Activated CD4-positive, alpha-beta memory T cell treated with anti-CD3 and anti-CD28 coated beads, Interleukin-2, amount 10 ng/mL, durations not matched to agents 7 days and 5 days (primary cell): ENCODE measurements at regions of chr1 and their contacts with region 1.

Region 1: GRCh38 chr1:150567717-150568593 is 11.5 kb downstream of the MCL1 start:
- DNase-seq: peak; percentile 69
- H3K4me3 Mint-ChIP-seq: peak overlapping the region; percentile 78
- H3K27ac Mint-ChIP-seq: peak overlapping the region; percentile 99
- H3K4me1 Mint-ChIP-seq: peaks cover 93% of the 10 kb centered on the region
- H3K27me3 Mint-ChIP-seq: no peaks in the 10 kb centered on the region

Region 2: GRCh38 chr1:150397402-150398032 is 170.4 kb before region 1 on chr1:
- CTCF ChIA-PET with region 1: no interaction called
- POLR2A ChIA-PET with region 1: no interaction called
- DNase-seq: no peak
- H3K4me3 Mint-ChIP-seq: no peak overlapping the region
- H3K27ac Mint-ChIP-seq: no peak overlapping the region
- H3K4me1 Mint-ChIP-seq: peaks cover 2% of the 10 kb centered on the region
- H3K27me3 Mint-ChIP-seq: no peaks in the 10 kb centered on the region

Region 3: DNA sequence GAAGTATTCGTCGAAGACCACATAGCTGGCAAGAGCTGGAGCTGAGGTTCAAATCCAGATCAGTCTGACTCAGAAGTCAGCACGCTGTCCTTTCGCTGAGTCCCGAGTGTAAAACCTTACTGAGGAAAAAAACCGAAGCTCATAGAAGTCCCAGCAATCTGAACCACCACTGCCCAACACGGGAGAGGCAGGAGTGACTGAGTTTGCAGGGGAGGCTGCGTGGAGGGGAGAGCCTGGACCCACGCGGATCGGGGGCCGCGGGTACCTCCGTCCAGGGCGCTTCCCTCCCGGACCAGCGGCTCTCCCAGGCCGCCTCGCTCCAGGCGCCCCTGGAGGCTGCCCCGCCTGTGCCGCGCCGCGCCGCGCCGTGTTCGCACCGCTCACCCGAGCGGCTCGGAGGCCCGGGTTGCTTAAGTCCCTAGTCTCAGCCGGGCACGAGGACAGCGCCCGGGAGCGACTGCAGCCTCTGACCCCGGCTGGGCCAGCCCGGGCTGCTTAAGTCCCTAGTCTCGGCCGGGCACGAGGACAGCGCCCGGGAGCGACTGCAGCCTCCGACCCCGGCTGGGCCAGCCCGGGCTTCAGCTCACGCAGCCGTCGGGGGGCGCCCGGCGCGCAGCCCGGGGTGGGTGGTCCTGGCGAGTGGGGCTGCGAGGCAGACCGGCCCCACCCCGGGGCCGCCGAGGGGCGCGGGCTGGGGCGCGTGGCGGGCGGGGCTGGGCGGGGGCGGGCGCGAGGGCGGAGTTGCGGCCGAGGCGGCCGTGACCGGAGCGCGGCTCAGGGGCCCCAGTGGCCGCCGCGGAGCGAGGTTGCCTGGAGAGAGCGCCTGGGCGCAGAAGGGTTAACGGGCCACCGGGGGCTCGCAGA is 19.1 kb before region 1 on chr1 and contains the start of gene ADAMTSL4:
- CTCF ChIA-PET with region 1: interaction called, 4 read pairs
- POLR2A ChIA-PET with region 1: interaction called, 15 read pairs
- DNase-seq: peak; percentile 53
- H3K4me3 Mint-ChIP-seq: peak within 1 kb of the TSS; percentile 72
- H3K27ac Mint-ChIP-seq: peak within 1 kb of the TSS; percentile 16
- H3K4me1 Mint-ChIP-seq: peaks cover 39% of the 10 kb centered on the region
- H3K27me3 Mint-ChIP-seq: peaks cover 22% of the 10 kb centered on the region
- total RNA-seq, gene ADAMTSL4: 1.4 to 1.6 TPM